ENCODE measurements at regions of chr6 and their contacts with region 1.

Region 1: DNA sequence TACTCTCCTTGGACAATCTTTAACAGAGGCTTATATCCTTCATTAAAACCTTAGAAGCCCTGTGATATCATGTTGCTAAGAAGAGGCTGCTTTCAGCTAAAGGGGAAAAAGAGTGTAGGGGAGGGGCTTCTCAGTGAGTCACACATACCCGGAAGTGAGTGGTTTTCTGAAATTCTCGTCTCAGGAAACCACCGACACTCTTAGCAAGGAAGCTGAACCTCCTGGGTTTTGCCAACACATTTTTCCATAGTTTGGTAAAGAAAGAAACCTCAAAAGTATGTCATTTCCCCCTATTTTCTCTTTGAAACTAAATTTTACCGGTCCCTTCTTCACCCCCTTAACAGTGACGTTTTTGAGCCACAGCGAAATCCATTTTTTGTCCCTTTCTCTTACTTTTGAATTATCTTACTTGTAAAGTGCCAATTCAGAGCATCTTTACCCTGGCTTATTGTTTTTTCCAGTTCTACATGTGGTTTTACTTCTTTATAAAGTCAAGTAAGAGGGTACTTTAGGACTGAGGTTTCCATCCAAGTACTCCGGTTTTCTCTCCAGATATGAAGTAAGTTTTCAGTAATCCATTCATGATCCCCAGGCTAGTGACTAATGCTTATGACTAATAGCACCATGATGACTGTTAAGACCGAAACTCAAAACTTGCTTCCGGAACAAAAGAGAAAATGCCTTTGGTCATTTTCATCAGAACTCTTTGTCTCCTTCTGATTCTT is 219.3 kb downstream of the ARHGAP18 start:
- DNase-seq: peak; percentile 79
- H3K4me3 Mint-ChIP-seq: peak overlapping the region; percentile 67
- H3K27ac Mint-ChIP-seq: peak overlapping the region; percentile 100
- H3K4me1 Mint-ChIP-seq: peaks cover 70% of the 10 kb centered on the region
- H3K27me3 Mint-ChIP-seq: no peaks in the 10 kb centered on the region

Region 2: DNA sequence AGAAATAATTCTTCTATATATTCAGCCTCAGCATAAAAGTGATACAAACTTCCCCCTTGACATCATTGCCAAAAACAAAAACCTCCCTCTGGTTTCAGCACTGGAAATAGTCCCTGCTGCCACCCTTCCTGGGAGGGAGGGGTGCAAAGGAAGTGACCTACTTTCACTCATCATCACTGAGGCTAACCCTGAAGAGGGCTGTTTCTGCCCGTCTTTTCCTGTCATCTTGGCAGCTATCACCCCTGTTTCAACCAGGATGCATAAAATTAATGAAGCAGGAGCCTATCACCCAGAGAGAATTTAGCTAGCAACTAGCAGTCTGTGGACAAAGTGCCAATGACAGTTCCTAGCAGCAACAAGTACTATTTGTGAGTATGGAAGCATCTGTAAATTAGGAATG is 209.9 kb before region 1 on chr6:
- CTCF ChIA-PET with region 1: no interaction called
- intact Hi-C with region 1: loop called (anchors 1 kb)
- DNase-seq: peak; percentile 76
- H3K4me3 Mint-ChIP-seq: peak overlapping the region; percentile 52
- H3K27ac Mint-ChIP-seq: peak overlapping the region; percentile 10
- H3K4me1 Mint-ChIP-seq: peaks cover 14% of the 10 kb centered on the region
- H3K27me3 Mint-ChIP-seq: no peaks in the 10 kb centered on the region

Region 3: DNA sequence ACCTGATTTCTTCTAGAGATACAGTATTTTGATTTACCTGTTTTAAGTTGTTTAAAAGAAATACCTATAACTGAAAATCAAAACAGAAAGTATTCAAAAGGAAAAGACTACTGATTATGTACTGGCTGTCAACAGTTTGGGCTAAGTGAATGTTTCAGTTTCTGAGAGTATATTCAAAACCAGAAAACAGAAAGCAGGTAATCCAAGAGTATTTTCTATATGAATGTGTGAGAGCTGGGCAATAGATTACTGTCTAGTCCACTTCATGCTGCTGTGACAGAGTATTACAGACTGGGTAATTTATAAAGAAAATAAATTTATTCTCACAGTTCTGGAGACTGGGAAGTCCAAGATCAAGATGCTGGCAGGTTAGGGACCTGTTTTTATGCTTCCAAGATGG is 41.7 kb before region 1 on chr6:
- CTCF ChIA-PET with region 1: no interaction called
- intact Hi-C with region 1: loop called (anchors 1 kb)
- DNase-seq: no peak
- H3K4me3 Mint-ChIP-seq: no peak overlapping the region
- H3K27ac Mint-ChIP-seq: peak overlapping the region; percentile 37
- H3K4me1 Mint-ChIP-seq: peaks cover 80% of the 10 kb centered on the region
- H3K27me3 Mint-ChIP-seq: no peaks in the 10 kb centered on the region

Region 4: DNA sequence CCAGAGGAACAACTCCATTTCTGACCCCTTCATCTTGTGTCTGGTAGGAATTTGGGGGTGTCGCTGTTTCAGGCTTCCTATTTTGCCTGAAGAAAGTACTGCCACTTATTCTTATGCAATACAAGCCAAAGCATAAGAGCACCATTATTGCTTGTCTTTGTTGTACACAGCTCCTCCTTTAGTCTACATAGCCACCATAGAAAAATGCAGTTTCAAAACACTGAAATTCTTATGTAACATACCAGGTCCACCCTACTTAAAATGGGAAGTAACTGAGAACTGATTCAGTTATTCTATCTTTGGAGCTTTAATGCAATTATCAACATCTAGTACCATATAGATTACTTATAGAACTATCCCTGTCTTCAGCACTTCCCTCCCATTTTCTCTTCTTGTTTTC is 36.2 kb before region 1 on chr6:
- CTCF ChIA-PET with region 1: interaction called, 3 read pairs
- intact Hi-C with region 1: loop called (anchors 1 kb)
- DNase-seq: no peak
- H3K4me3 Mint-ChIP-seq: no peak overlapping the region
- H3K27ac Mint-ChIP-seq: no peak overlapping the region
- H3K4me1 Mint-ChIP-seq: peaks cover 50% of the 10 kb centered on the region
- H3K27me3 Mint-ChIP-seq: no peaks in the 10 kb centered on the region

Region 5: GRCh38 chr6:129875610-129876520 is 385.2 kb after region 1 on chr6:
- CTCF ChIA-PET with region 1: no interaction called
- intact Hi-C with region 1: loop called (anchors 5 kb)
- DNase-seq: no peak
- H3K4me3 Mint-ChIP-seq: no peak overlapping the region
- H3K27ac Mint-ChIP-seq: no peak overlapping the region
- H3K4me1 Mint-ChIP-seq: peaks cover 13% of the 10 kb centered on the region
- H3K27me3 Mint-ChIP-seq: peaks cover 2% of the 10 kb centered on the region

Region 6: GRCh38 chr6:130132286-130132701 is 641.6 kb after region 1 on chr6:
- CTCF ChIA-PET with region 1: no interaction called
- intact Hi-C with region 1: loop called (anchors 5 kb)
- DNase-seq: peak; percentile 69
- H3K4me3 Mint-ChIP-seq: peak overlapping the region; percentile 65
- H3K27ac Mint-ChIP-seq: peak overlapping the region; percentile 85
- H3K4me1 Mint-ChIP-seq: peaks cover 59% of the 10 kb centered on the region
- H3K27me3 Mint-ChIP-seq: no peaks in the 10 kb centered on the region

Measured in activated naive CD4-positive, alpha-beta T cell treated with anti-CD3 and anti-CD28 coated beads for 36 hours (primary cell).